ENCODE measurements at regions of chr4 and their contacts with region 1.

Region 1: DNA sequence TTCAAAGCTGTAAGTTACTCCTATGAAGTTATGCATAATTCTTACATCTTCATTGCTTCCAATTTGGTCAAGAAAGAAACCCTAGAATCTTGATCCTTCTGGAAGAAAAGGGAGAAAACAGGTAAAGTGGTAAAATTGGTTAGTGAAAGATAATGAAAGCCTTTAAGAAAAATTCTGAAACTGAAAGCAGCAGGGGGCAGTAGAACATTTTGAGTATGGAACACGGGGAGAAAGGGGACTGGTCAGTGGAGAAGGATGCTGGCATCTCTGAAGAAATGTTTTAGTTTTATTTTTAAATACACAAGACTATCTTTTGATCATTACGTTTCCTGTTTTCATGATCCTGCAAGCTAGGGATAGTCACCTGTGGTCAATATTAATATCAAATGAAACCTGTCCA is 54.3 kb downstream of the SLIT2 start:
- DNase-seq: no peak
- H3K4me3 ChIP-seq: no peak overlapping the region
- CTCF ChIP-seq: peak; percentile 27

Region 2: DNA sequence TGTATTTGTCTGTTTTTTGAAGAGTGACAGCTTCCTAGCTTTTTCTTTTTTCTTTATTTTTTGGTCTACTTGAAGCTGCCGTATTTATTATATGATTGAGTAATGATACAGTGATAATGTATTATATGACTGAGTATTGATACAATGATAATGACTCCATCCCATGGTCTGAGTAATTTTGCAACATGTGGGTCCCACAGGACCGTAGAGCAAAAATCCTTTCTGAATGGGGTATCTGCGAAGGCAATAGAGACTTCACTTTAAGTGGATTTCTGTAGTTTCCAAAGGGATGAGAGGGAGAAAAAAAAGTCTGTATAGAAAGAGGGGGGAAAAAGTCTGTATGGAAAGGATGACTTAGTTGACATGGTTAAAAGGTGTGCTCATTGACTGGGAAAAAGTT is 13.2 kb before region 1 on chr4:
- CTCF ChIA-PET with region 1: interaction called, 35 read pairs
- POLR2A ChIA-PET with region 1: no interaction called
- DNase-seq: no peak
- H3K4me3 ChIP-seq: no peak overlapping the region
- CTCF ChIP-seq: no peak

Region 3: GRCh38 chr4:20326977-20327376 is 21.0 kb after region 1 on chr4:
- CTCF ChIA-PET with region 1: interaction called, 10 read pairs
- POLR2A ChIA-PET with region 1: no interaction called
- DNase-seq: no peak
- H3K4me3 ChIP-seq: no peak overlapping the region
- CTCF ChIP-seq: no peak

Region 4: DNA sequence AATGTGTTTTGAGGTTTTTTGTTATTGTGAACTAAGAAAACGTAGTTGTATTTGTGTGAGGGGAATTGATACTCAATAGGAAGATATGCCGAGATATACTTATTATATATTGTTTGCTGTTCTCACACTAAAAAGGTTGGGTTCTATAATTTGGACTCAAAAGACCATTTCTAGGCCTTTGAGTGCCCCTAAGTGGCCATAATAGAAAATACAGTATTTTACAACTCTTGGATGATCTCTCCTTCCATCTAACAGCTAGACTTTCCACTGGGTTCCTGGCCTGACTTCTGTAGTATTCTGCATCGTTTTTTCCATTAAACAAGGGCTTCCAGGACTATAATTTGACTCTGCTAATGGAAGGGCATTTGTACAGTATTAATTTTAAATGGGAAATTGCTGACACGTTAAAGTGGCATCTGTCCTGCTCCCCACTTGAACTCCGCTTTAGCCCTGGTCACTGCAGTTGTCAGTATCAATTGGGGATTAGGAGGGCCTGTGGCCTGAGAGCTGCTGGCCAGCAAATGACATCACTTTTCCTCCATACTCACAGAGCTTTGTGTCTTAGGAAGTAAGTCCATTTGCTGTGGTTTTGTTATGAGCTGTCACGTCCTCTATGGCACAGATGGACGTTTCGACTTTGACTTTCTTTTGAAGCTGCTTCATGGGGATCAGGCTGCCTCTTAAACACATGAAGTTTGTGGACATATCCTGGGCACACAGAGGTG is 122.6 kb after region 1 on chr4:
- CTCF ChIA-PET with region 1: interaction called, 69 read pairs
- POLR2A ChIA-PET with region 1: no interaction called
- DNase-seq: no peak
- H3K4me3 ChIP-seq: no peak overlapping the region
- CTCF ChIP-seq: peak; percentile 9

Region 5: GRCh38 chr4:20684852-20685763 is 379.1 kb after region 1 on chr4:
- CTCF ChIA-PET with region 1: interaction called, 12 read pairs
- POLR2A ChIA-PET with region 1: no interaction called
- DNase-seq: no peak
- H3K4me3 ChIP-seq: no peak overlapping the region
- CTCF ChIP-seq: peak; percentile 22

Measured in AG04449 (cell line).